ENCODE measurements at regions of chr3 and their contacts with region 1.

Region 1: GRCh38 chr3:177478170-177478860 is 281.0 kb upstream of the TBL1XR1 start:
- DNase-seq: peak; percentile 95
- ATAC-seq: peak; percentile 98
- H3K4me3 ChIP-seq: peak overlapping the region in 1 of 2 experiments; percentile 21; a peak in 1 of 4 replicates
- H3K27ac ChIP-seq: peak overlapping the region; percentile 93
- H3K4me1 ChIP-seq: peaks cover 40% of the 10 kb centered on the region
- H3K27me3 ChIP-seq: no peaks in the 10 kb centered on the region
- CTCF ChIP-seq: no peak

Region 2: GRCh38 chr3:177050501-177051237 is 427.6 kb before region 1 on chr3:
- CTCF ChIA-PET with region 1: no interaction called
- POLR2A ChIA-PET with region 1: no interaction called
- in situ Hi-C with region 1: no loop called
- intact Hi-C with region 1: loop called (anchors 5 kb)
- DNase-seq: peak; percentile 30
- ATAC-seq: peak; percentile 84
- H3K4me3 ChIP-seq: no peak overlapping the region
- H3K27ac ChIP-seq: peak overlapping the region; percentile 85
- H3K4me1 ChIP-seq: peaks cover 34% of the 10 kb centered on the region
- H3K27me3 ChIP-seq: no peaks in the 10 kb centered on the region
- CTCF ChIP-seq: peak; percentile 69; the same call in 1 of the 2 replicates

Region 3: DNA sequence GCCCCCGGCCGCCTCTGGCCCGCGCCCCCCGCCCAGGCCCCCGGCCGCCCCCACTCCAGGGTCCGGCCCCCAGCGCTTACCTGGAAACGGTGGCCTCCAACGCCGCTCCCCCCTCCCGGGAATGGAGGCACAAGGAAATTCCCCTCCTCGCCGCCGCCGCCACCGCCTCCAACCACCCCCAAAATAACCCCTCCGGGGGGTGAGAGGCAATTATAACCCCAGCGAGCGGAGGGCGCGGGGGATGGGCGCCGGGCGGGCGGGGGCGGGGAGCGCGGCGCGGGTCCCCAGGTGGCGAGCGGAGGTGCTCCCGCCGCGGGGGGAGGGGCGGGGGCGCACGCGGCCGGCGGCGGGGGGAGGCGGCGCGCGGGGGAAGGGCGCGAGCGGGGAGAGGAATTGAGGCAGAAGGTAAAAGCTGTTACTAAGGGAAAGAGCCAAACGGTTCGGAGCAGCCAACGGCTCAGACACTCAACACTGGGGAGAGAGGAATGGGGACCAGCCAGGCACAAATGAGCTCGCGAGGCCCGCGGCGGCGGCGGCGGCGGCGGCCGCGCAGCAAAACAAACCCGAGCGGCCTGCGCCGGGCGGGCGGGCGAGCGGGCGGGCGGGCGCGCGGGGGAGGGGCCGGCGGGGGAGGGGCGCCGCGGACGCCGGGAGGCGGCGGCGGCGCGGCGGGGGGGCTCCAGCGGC is 281.1 kb before region 1 on chr3 and contains the start of gene TBL1XR1:
- CTCF ChIA-PET with region 1: no interaction called
- POLR2A ChIA-PET with region 1: no interaction called
- in situ Hi-C with region 1: no loop called
- intact Hi-C with region 1: loop called (anchors 2 kb)
- DNase-seq: peak; percentile 48
- ATAC-seq: peak; percentile 81
- H3K4me3 ChIP-seq: peak within 1 kb of the TSS; percentile 75 to 84
- H3K27ac ChIP-seq: peak within 1 kb of the TSS; percentile 100
- H3K4me1 ChIP-seq: peaks cover 42% of the 10 kb centered on the region
- H3K27me3 ChIP-seq: no peaks in the 10 kb centered on the region
- CTCF ChIP-seq: no peak
- total RNA-seq, gene TBL1XR1: 192 TPM

Region 4: DNA sequence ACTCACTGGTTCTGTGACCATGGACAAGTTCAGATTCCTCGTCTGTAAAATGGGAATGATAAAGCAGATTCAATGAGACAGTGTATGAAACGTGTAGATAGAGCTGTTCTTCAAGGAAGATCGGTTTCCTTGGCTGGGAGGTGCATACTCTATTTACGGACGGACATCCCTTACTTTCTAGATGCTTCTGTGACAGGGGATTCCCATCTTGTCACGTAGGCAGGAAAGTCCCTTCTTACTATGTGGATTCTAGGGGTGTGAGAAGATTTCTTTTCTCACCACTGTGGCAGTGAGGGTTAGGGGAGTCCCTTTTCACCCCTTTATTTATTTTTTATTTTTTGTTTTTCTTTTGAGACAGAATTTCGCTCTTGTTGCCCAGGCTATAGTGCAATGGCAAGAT is 100.1 kb before region 1 on chr3:
- CTCF ChIA-PET with region 1: no interaction called
- POLR2A ChIA-PET with region 1: no interaction called
- in situ Hi-C with region 1: no loop called
- intact Hi-C with region 1: no loop called
- DNase-seq: no peak
- ATAC-seq: no peak
- H3K4me3 ChIP-seq: no peak overlapping the region
- H3K27ac ChIP-seq: peak overlapping the region; percentile 55; the same call in 1 of the 2 replicates
- H3K4me1 ChIP-seq: peaks cover 2% of the 10 kb centered on the region; the same call in 1 of the 2 replicates
- H3K27me3 ChIP-seq: no peaks in the 10 kb centered on the region
- CTCF ChIP-seq: no peak

Region 5: GRCh38 chr3:177816667-177817208 is 338.4 kb after region 1 on chr3:
- CTCF ChIA-PET with region 1: no interaction called
- POLR2A ChIA-PET with region 1: no interaction called
- in situ Hi-C with region 1: no loop called
- intact Hi-C with region 1: loop called (anchors 10 kb)
- DNase-seq: peak; percentile 74
- ATAC-seq: peak; percentile 81
- H3K4me3 ChIP-seq: no peak overlapping the region
- H3K27ac ChIP-seq: peak overlapping the region; percentile 77
- H3K4me1 ChIP-seq: 0 out of 2 replicates have a peak, but pooled peaks cover 7% of the 10 kb centered on the region
- H3K27me3 ChIP-seq: no peaks in the 10 kb centered on the region
- CTCF ChIP-seq: peak; percentile 58

Region 6: DNA sequence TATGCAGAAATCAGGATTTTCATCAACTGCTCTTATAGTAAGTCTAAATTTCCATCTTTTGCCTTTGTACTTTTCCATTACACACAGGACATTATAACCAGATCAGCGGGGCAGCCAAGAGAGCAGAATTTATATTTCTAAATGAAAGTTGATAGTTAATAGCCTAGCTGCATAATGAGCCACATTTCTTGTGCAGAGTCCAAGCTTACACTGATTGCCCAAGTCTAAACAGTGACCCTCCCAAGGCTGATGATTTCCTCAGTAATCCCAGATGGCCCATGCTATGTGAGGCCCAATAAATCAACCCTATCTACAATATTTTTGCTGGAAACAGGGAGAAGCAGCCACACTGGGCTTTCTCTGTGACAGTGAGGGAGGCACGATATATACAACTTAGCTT is 582.1 kb after region 1 on chr3:
- CTCF ChIA-PET with region 1: no interaction called
- POLR2A ChIA-PET with region 1: no interaction called
- in situ Hi-C with region 1: no loop called
- intact Hi-C with region 1: loop called (anchors 10 kb)
- DNase-seq: no peak
- ATAC-seq: no peak
- H3K4me3 ChIP-seq: no peak overlapping the region
- H3K27ac ChIP-seq: no peak overlapping the region
- H3K4me1 ChIP-seq: no peaks in the 10 kb centered on the region; the same call in 1 of the 2 replicates
- H3K27me3 ChIP-seq: no peaks in the 10 kb centered on the region
- CTCF ChIP-seq: no peak

Region 7: GRCh38 chr3:178201714-178202113 is 723.4 kb after region 1 on chr3:
- CTCF ChIA-PET with region 1: no interaction called
- POLR2A ChIA-PET with region 1: interaction called, 10 read pairs
- in situ Hi-C with region 1: no loop called
- intact Hi-C with region 1: no loop called
- DNase-seq: no peak
- ATAC-seq: no peak
- H3K4me3 ChIP-seq: no peak overlapping the region
- H3K27ac ChIP-seq: no peak overlapping the region
- H3K4me1 ChIP-seq: no peaks in the 10 kb centered on the region
- H3K27me3 ChIP-seq: no peaks in the 10 kb centered on the region
- CTCF ChIP-seq: no peak

Measured in Panc1 (cell line).